ENCODE measurements at regions of chrX and their contacts with region 1.

Region 1: DNA sequence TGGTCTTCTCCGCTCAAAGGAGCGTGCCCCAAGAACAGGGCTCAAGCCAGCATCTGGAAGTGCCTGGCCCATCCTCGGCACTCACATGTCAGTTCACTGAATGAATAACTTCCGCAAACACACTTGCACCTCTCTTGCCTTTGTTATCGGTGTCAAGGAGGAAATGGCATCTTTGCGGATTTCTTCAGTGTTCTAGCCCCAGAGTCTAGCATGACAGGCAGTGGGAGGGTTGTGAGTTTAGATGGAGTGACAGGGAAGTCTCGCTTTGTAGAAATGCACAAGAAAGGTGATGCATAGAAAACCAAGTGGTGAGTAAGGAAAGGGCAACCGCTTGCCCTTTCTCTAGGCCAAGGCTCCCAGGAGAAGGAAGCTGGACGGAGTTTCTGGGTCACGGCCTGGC is 17.6 kb upstream of the MECP2 start:
- DNase-seq: no peak
- H3K4me3 Mint-ChIP-seq: no peak overlapping the region
- H3K27ac Mint-ChIP-seq: no peak overlapping the region
- H3K4me1 Mint-ChIP-seq: peaks cover 2% of the 10 kb centered on the region
- H3K27me3 Mint-ChIP-seq: no peaks in the 10 kb centered on the region

Region 2: DNA sequence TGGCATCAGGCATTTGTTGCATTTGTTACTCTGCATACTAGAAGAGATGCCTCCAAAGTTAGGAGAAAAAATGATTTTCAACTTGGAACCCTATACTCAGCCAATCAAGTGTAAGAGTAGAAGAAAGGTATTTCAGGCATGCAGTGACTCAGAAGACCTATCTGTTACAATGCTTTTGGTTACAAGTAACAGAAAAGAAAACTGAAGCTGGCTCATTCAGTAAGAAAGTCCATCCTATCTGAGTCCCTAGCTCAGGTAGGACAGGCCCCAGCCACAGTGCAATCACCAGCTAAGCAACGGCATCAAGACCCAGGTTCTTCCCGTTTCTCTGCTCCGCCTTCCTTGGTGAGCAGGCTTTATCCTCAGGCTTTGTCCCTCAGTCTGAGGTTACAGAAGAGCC is 40.9 kb before region 1 on chrX:
- intact Hi-C with region 1: no loop called
- DNase-seq: no peak
- H3K4me3 Mint-ChIP-seq: no peak overlapping the region
- H3K27ac Mint-ChIP-seq: no peak overlapping the region
- H3K4me1 Mint-ChIP-seq: peaks cover 11% of the 10 kb centered on the region
- H3K27me3 Mint-ChIP-seq: no peaks in the 10 kb centered on the region

Region 3: GRCh38 chrX:154097597-154098541 is 17.2 kb before region 1 on chrX and contains the start of gene MECP2:
- intact Hi-C with region 1: loop called (anchors 2 kb)
- DNase-seq: peak; percentile 84
- H3K4me3 Mint-ChIP-seq: peak within 1 kb of the TSS; percentile 97
- H3K27ac Mint-ChIP-seq: peak within 1 kb of the TSS; percentile 99
- H3K4me1 Mint-ChIP-seq: peaks cover 54% of the 10 kb centered on the region
- H3K27me3 Mint-ChIP-seq: no peaks in the 10 kb centered on the region
- total RNA-seq, gene MECP2: 53.4 and 59.4 TPM in 2 replicates